Activated naive CD4-positive, alpha-beta T cell treated with anti-CD3 and anti-CD28 coated beads for 36 hours (primary cell): ENCODE measurements at regions of chr16 and their contacts with region 1.

Region 1: DNA sequence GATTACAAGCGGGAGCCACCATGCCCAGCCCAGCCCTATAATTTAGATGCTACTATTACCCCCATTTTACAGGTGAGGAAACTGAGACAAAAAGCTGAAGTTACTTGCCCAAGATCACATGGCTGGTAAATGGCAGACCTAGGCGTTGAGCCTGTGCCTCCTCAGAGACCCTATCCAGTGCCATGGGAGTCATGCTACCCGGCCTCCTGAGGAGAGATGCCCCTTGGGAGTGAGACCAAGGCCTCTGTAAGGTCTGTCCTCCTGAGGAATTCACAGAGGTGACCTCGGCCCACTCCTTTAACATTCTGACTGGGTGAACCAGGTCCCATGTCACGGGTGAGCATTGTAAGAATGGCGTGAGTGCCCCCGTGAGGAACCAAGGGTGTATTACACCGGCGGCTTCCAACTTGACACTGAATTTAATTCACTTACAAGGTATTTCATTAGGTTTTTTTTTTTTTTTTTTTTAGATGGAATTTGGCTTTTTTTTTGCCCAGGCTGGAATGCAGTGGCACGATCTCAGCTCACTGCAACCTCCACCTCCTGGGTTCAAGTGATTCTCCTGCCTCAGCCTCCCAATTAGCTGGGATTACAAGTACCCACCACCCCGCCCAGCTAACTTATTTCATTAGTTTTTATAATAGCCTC is 95.7 kb downstream of the ABCC6 start:
- DNase-seq: peak; percentile 85
- H3K4me3 Mint-ChIP-seq: no peak overlapping the region
- H3K27ac Mint-ChIP-seq: peak overlapping the region; percentile 28
- H3K4me1 Mint-ChIP-seq: no peaks in the 10 kb centered on the region
- H3K27me3 Mint-ChIP-seq: no peaks in the 10 kb centered on the region

Region 2: DNA sequence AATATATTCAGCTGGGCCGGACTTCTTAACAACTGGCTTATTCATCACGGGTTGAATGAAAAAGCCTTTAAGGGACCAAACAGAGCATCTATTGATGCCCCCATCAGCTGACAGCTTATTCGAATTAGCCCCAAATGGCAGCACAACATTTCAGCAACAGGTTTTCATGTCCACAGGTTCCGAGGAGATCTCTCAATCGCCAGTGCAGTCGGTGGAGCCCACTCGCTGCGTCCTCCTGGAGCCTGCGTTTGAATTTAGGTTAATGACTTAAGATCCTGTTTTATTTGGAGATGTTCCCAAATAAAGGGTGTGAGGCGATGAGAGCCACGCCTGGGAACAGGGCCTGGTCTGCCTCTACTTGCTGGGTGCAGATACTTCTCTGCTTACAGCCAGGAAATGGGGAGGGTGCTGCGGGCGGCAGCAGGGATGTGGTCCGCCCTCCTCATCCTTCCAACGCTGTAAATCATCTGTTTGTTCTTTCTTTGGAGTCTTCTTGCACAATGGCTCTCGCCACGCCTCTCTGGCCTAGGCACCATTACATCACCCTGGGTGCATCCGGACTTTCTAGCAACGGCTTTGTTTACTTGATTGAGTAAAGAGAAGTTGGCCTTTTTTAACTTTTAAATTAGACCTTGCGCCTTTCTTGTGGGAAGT is 455.0 kb before region 1 on chr16:
- CTCF ChIA-PET with region 1: no interaction called
- intact Hi-C with region 1: loop called (anchors 10 kb)
- DNase-seq: peak; percentile 90
- H3K4me3 Mint-ChIP-seq: peak overlapping the region; percentile 62
- H3K27ac Mint-ChIP-seq: peak overlapping the region; percentile 89
- H3K4me1 Mint-ChIP-seq: peaks cover 43% of the 10 kb centered on the region
- H3K27me3 Mint-ChIP-seq: no peaks in the 10 kb centered on the region

Region 3: GRCh38 chr16:15765880-15766279 is 361.7 kb before region 1 on chr16:
- CTCF ChIA-PET with region 1: interaction called, 4 read pairs
- intact Hi-C with region 1: loop called (anchors 1 kb)
- DNase-seq: peak; percentile 53
- H3K4me3 Mint-ChIP-seq: no peak overlapping the region
- H3K27ac Mint-ChIP-seq: no peak overlapping the region
- H3K4me1 Mint-ChIP-seq: no peaks in the 10 kb centered on the region
- H3K27me3 Mint-ChIP-seq: peaks cover 5% of the 10 kb centered on the region

Region 4: DNA sequence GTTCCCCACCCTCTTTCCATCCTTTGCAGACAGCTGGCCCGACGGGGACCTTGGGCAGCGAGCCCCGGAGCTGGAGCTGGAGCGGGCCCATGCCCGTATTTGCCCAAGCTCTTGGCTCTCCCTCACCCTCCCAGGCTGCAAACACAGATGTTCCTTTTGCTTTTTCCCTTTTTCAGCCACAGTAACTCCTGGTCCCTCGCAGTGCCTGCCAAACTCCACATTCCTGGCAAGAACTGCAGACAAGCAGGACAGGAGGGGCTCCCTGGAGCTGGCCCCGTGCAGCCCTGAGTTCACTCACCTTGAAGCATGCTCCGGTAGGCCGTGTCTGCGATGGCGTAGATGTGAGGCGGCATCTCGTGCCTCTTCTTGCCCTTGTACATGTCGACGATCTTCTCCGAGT is 304.6 kb before region 1 on chr16:
- CTCF ChIA-PET with region 1: interaction called, 5 read pairs
- intact Hi-C with region 1: loop called (anchors 1 kb)
- DNase-seq: no peak
- H3K4me3 Mint-ChIP-seq: no peak overlapping the region
- H3K27ac Mint-ChIP-seq: no peak overlapping the region
- H3K4me1 Mint-ChIP-seq: no peaks in the 10 kb centered on the region
- H3K27me3 Mint-ChIP-seq: no peaks in the 10 kb centered on the region

Region 5: DNA sequence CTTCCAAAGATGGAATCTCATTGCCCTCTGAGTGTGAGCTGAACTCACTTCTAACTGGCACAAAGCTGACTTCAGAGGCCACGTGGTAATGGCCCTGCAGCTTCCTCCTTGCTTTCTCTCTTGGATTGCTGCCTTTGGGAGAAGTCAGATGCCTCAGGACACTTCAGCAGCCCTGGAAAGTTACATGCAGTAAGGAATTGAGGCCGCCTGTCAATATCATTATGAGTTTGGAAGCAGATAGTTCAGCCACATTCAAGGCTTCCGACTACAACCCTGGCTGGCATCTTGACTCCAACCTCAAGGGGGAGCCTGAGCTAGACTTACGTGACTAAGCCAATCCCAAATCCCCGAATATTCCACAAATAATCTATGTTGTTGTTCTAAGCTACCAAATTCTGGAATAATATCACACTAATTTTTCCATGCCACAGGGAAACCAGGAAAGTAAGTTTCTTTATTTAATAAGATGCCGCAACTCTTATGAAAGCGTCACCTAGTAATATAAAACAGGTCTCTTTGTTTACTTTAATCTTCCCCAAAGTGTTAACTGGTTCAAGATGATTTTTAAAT is 252.8 kb before region 1 on chr16:
- CTCF ChIA-PET with region 1: interaction called, 5 read pairs
- intact Hi-C with region 1: loop called (anchors 1 kb)
- DNase-seq: peak; percentile 27
- H3K4me3 Mint-ChIP-seq: no peak overlapping the region
- H3K27ac Mint-ChIP-seq: no peak overlapping the region
- H3K4me1 Mint-ChIP-seq: peaks cover 11% of the 10 kb centered on the region
- H3K27me3 Mint-ChIP-seq: no peaks in the 10 kb centered on the region

Region 6: DNA sequence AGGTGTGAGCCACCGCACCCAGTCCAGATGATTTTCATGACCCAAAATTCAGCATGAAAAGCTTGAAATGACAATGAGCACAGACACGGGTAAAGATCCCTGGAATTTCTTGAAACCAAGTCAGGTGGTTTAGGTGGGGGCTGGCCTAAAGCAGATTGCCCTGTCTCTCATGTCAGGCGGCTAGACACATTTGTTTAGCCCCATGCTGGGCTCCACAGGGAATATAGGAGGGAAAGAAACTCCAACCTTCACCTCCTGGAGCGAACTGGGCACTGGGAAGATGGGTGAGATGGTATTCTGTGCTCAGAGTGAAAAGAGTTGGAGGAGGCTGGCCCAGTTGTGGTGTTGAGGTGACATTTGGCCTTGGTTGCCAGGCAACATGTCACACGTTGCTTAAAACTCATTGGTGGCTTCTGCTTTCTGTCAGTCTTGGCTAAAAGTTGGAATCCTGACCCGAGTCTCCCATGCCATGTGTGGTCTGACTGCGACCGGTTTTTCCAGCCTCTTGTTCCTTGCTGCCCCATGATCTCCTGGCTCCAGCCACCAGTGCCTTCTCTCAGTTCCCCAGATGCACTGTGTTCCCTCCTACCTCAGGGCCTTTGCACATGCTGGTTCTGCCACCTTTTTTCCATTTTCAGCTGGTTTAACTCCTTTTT is 18.0 kb before region 1 on chr16:
- CTCF ChIA-PET with region 1: no interaction called
- intact Hi-C with region 1: no loop called
- DNase-seq: no peak
- H3K4me3 Mint-ChIP-seq: no peak overlapping the region
- H3K27ac Mint-ChIP-seq: no peak overlapping the region
- H3K4me1 Mint-ChIP-seq: no peaks in the 10 kb centered on the region
- H3K27me3 Mint-ChIP-seq: no peaks in the 10 kb centered on the region